Naive thymus-derived CD4-positive, alpha-beta T cell (primary cell): ENCODE measurements at regions of chr20 and their contacts with region 1.

Region 1: GRCh38 chr20:38805502-38805957 is at the start of gene PPP1R16B:
- DNase-seq: peak; percentile 62 to 83 (median 74)
- ATAC-seq: peak; percentile 72
- H3K4me3 ChIP-seq: peak within 1 kb of the TSS; percentile 86
- H3K4me3 Mint-ChIP-seq: peak within 1 kb of the TSS; percentile 81 to 95 (median 92)
- H3K27ac ChIP-seq: peak within 1 kb of the TSS; percentile 99
- H3K27ac Mint-ChIP-seq: peak within 1 kb of the TSS; percentile 85 to 100 (median 97)
- H3K4me1 ChIP-seq: peaks cover 33 to 47% of the 10 kb centered on the region in 2 donors
- H3K4me1 Mint-ChIP-seq: peaks cover 36 to 58% (median 53%) of the 10 kb centered on the region in 7 donors
- H3K27me3 ChIP-seq: no peaks in the 10 kb centered on the region
- H3K27me3 Mint-ChIP-seq: peaks cover 0 to 3% (median 0%) of the 10 kb centered on the region in 5 donors
- total RNA-seq, gene PPP1R16B: 20.8 to 75.4 (median 22.0) TPM

Region 2: DNA sequence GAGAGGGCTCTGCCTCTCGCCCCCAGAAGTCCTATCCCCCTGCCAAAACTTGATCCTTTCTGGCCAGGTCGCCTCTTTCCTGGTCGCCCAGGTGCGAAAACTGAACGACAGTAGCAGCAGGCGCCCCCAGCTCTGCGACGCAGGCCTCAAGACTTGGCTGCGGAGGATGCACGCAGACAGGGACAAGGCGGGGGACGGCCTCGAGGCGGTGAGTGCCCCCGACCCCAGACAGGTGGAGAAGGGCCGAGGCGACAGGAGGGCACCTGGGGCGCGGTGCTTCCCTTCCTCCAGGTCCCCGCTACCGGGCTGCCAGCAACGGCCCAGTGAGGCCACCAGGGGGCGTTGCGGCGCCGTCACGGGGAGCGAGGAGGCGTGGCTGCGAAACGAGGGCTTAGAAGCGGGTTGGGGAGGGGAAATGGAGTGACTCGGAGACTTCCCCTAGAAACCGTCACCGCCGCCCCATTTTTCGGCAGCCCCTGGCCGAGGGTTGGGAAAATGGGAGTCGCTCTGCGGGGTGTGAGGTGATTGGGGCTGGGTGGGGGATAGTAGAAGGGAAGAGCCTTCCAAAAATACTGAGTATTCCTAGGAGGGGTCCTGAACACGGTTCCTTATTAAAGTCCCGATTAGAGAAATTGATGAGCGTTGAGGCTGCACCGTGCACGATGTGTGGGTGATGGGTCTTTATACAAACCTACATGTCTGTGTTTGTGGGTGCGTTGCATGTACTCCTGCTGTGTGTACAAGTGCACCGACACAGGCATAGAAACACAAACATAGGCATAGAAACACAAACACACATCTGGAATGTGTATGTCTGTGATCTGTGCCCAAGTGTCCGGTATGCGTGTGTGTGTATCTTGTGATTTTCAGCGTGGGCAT is 159.3 kb before region 1 on chr20:
- CTCF ChIA-PET with region 1: no interaction called
- POLR2A ChIA-PET with region 1: no interaction called
- intact Hi-C with region 1: loop called in 1 of 2 experiments (anchors 2 kb)
- DNase-seq: peak; percentile 80 to 97 (median 90)
- ATAC-seq: peak; percentile 99
- H3K4me3 ChIP-seq: peak overlapping the region; percentile 46
- H3K4me3 Mint-ChIP-seq: peak overlapping the region; percentile 74 to 91 (median 84)
- H3K27ac ChIP-seq: no peak overlapping the region
- H3K27ac Mint-ChIP-seq: peak overlapping the region in 3 of 9 donors; percentile 10 to 46 (median 31)
- H3K4me1 ChIP-seq: peaks cover 7 to 8% of the 10 kb centered on the region in 2 donors
- H3K4me1 Mint-ChIP-seq: peaks cover 0 to 8% (median 8%) of the 10 kb centered on the region in 7 donors
- H3K27me3 ChIP-seq: no peaks in the 10 kb centered on the region
- H3K27me3 Mint-ChIP-seq: peaks cover 24 to 49% (median 34%) of the 10 kb centered on the region in 5 donors

Region 3: DNA sequence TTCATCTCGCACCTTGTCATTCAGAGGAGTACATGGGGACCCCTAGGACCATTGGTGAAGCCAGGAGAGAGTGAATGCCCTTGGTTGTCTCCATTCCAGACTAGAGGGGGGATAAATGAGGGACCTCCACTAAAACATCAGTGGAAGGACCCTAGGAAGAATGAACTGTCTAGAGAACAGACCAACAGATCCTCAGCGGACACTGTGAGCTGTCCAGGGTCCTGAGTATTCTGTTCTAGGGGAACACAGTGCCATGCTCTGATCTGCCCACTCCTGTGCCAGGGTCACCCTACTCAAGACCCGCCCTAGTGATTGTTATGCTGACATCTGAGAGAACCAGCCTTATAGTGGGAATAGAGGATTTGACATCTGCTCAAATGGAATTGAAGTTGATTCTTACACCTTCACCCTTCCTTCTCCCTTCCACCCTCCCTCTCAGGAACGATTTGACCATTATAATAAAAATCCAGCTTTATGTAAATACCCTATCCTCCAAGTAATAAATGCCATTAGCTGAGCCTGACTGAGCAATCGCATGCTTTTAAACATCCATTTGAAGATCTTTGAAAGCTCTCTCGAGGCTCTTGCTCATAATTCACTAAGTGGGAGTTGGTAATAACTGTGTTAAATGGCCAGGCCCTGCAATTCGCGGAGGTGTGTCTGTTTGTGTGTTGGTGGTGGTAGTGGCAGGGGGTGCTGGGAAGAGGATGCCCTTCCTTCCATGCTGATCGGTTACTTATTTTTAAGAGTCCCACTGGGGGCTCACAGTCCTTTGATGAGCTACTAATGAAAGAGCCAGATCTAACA is 124.8 kb before region 1 on chr20:
- CTCF ChIA-PET with region 1: no interaction called
- POLR2A ChIA-PET with region 1: no interaction called
- intact Hi-C with region 1: no loop called
- DNase-seq: peak in 2 of 9 donors; percentile 19 to 25
- ATAC-seq: peak; percentile 54
- H3K4me3 ChIP-seq: no peak overlapping the region
- H3K4me3 Mint-ChIP-seq: no peak overlapping the region
- H3K27ac ChIP-seq: no peak overlapping the region
- H3K27ac Mint-ChIP-seq: no peak overlapping the region
- H3K4me1 ChIP-seq: no peaks in the 10 kb centered on the region
- H3K4me1 Mint-ChIP-seq: no peaks in the 10 kb centered on the region
- H3K27me3 ChIP-seq: no peaks in the 10 kb centered on the region
- H3K27me3 Mint-ChIP-seq: peaks cover 15 to 58% (median 53%) of the 10 kb centered on the region in 5 donors

Region 4: GRCh38 chr20:38764567-38765355 is 40.8 kb before region 1 on chr20:
- CTCF ChIA-PET with region 1: interaction called, 3 read pairs
- POLR2A ChIA-PET with region 1: no interaction called
- intact Hi-C with region 1: loop called in 1 of 2 experiments (anchors 5 kb)
- DNase-seq: peak in 1 of 9 donors; percentile 41
- ATAC-seq: peak; percentile 44
- H3K4me3 ChIP-seq: no peak overlapping the region
- H3K4me3 Mint-ChIP-seq: no peak overlapping the region
- H3K27ac ChIP-seq: no peak overlapping the region
- H3K27ac Mint-ChIP-seq: peak overlapping the region in 3 of 9 donors; percentile 7 to 34 (median 28)
- H3K4me1 ChIP-seq: no peaks in the 10 kb centered on the region
- H3K4me1 Mint-ChIP-seq: peaks cover 0 to 30% (median 5%) of the 10 kb centered on the region in 7 donors
- H3K27me3 ChIP-seq: no peaks in the 10 kb centered on the region
- H3K27me3 Mint-ChIP-seq: no peaks in the 10 kb centered on the region

Region 5: GRCh38 chr20:38825901-38826625 is 20.5 kb after region 1 on chr20:
- CTCF ChIA-PET with region 1: no interaction called
- POLR2A ChIA-PET with region 1: interaction called, 4 read pairs
- intact Hi-C with region 1: loop called in 1 of 2 experiments (anchors 2 kb)
- DNase-seq: no peak
- ATAC-seq: no peak
- H3K4me3 ChIP-seq: no peak overlapping the region
- H3K4me3 Mint-ChIP-seq: no peak overlapping the region
- H3K27ac ChIP-seq: no peak overlapping the region
- H3K27ac Mint-ChIP-seq: peak overlapping the region in 7 of 9 donors; percentile 18 to 84 (median 65)
- H3K4me1 ChIP-seq: peaks cover 16 to 17% of the 10 kb centered on the region in 2 donors
- H3K4me1 Mint-ChIP-seq: peaks cover 24 to 83% (median 68%) of the 10 kb centered on the region in 7 donors
- H3K27me3 ChIP-seq: no peaks in the 10 kb centered on the region
- H3K27me3 Mint-ChIP-seq: no peaks in the 10 kb centered on the region

Region 6: GRCh38 chr20:38863024-38863851 is 57.7 kb after region 1 on chr20:
- CTCF ChIA-PET with region 1: no interaction called
- POLR2A ChIA-PET with region 1: no interaction called
- intact Hi-C with region 1: loop called in 1 of 2 experiments (anchors 5 kb)
- DNase-seq: peak in 1 of 9 donors; percentile 45
- ATAC-seq: peak; percentile 79
- H3K4me3 ChIP-seq: no peak overlapping the region
- H3K4me3 Mint-ChIP-seq: peak overlapping the region in 3 of 10 donors; percentile 8 to 56 (median 10)
- H3K27ac ChIP-seq: no peak overlapping the region
- H3K27ac Mint-ChIP-seq: peak overlapping the region in 6 of 9 donors; percentile 1 to 78 (median 33)
- H3K4me1 ChIP-seq: peaks cover 15 to 29% of the 10 kb centered on the region in 2 donors
- H3K4me1 Mint-ChIP-seq: peaks cover 24 to 64% (median 42%) of the 10 kb centered on the region in 7 donors
- H3K27me3 ChIP-seq: no peaks in the 10 kb centered on the region
- H3K27me3 Mint-ChIP-seq: no peaks in the 10 kb centered on the region

Region 7: GRCh38 chr20:38893565-38894090 is 88.1 kb after region 1 on chr20:
- CTCF ChIA-PET with region 1: interaction called, 6 read pairs
- POLR2A ChIA-PET with region 1: interaction called, 3 read pairs
- intact Hi-C with region 1: loop called (anchors 1 kb)
- DNase-seq: peak; percentile 59 to 85 (median 77)
- ATAC-seq: peak; percentile 92
- H3K4me3 ChIP-seq: peak overlapping the region; percentile 33
- H3K4me3 Mint-ChIP-seq: peak overlapping the region in 8 of 10 donors; percentile 5 to 64 (median 43)
- H3K27ac ChIP-seq: peak overlapping the region; percentile 42
- H3K27ac Mint-ChIP-seq: peak overlapping the region; percentile 14 to 94 (median 70)
- H3K4me1 ChIP-seq: peaks cover 7 to 10% of the 10 kb centered on the region in 2 donors
- H3K4me1 Mint-ChIP-seq: peaks cover 21 to 52% (median 29%) of the 10 kb centered on the region in 7 donors
- H3K27me3 ChIP-seq: no peaks in the 10 kb centered on the region
- H3K27me3 Mint-ChIP-seq: no peaks in the 10 kb centered on the region

Region 8: DNA sequence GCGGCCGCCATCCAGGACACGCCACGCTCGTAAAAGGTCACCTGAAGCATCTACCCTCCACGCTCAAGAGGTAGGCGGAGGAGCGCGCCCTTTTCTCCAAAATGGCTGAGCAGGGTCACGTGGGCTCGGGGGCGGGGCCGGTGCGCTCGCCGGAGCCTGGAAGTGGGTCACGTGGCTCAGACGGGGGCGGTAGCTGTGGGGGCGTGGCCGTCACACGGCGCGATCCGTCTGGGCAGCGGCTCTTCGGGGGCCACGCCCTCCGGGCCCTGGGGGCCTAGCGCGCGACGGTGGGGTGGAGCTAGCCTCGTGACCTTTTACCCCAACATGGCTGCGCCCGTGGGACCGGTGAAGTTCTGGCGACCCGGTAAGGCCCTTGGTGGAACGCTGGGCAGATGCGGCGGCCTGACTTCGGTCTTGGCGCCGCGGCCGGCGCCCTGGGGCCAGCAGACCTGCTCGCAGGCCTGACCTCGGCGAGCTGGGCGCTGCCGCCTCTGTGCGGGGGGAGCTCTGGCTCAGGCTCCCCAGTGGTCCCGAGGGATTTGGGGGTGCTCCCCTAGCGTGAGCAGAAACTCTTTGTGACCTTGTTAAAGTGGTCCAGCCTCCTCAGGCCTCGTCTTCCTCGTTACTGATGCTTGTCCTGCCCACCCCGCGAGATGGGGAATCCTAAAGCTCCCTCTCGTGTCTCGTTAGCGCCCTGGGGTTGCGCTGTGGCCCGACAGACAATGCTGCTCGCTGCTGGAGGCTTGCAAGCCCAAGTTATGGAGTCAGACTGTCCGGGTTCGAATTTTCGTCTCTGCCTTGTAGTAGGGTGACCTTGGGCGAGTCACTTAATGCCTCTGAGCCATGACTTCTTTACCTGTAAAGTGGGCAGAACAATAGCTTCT is 156.8 kb after region 1 on chr20 and contains the start of gene DHX35:
- CTCF ChIA-PET with region 1: interaction called, 4 read pairs
- POLR2A ChIA-PET with region 1: interaction called, 8 read pairs
- intact Hi-C with region 1: loop called in 1 of 2 experiments (anchors 1 kb)
- DNase-seq: peak; percentile 96 to 99 (median 98)
- ATAC-seq: peak; percentile 100
- H3K4me3 ChIP-seq: peak within 1 kb of the TSS; percentile 97
- H3K4me3 Mint-ChIP-seq: peak within 1 kb of the TSS; percentile 92 to 97 (median 96)
- H3K27ac ChIP-seq: peak within 1 kb of the TSS; percentile 80
- H3K27ac Mint-ChIP-seq: peak within 1 kb of the TSS; percentile 92 to 98 (median 96)
- H3K4me1 ChIP-seq: peaks cover 6 to 16% of the 10 kb centered on the region in 2 donors
- H3K4me1 Mint-ChIP-seq: peaks cover 16 to 46% (median 34%) of the 10 kb centered on the region in 7 donors
- H3K27me3 ChIP-seq: no peaks in the 10 kb centered on the region
- H3K27me3 Mint-ChIP-seq: no peaks in the 10 kb centered on the region
- total RNA-seq, gene DHX35: 8.0 to 13.3 (median 10.6) TPM